ENCODE measurements at regions of chr10 and their contacts with region 1.

Region 1: DNA sequence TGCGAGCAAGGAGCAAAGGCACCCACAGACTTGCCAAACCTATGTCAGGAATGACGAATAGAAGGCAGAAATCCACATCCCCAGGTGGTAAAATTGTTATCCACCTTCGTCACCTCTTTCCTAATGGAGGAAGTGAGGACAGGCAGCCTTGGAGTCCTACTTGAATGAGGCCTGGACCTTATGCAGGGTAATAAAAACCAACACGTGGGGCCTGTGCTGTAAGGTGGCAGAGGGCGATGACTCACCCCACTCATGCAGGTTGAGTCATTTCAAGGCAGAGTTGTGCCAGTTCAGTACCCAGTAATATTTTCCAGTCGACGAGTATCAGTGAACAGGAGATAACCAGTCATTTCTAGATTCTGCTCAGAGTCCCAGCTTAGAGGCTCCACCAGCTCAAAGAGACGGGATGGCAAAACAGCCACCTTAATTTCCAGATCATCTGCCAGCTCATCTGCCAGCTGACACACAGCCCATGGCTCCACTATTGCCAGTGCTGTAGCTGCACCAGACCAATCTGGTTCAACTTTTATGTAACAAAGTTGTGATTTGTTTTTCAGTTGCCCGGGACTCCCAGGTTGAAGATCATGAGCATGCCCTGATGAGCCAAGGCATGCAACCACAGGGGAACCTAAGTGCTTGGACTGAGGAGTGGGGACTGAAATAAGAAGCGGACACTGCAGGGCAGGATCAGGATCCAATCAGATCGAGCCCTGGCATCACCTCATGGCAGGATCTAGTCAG is 176.2 kb upstream of the ITGB1 start:
- DNase-seq: peak; percentile 80 to 97
- H3K4me3 ChIP-seq: no peak overlapping the region
- H3K27ac ChIP-seq: peak overlapping the region; percentile 95
- H3K4me1 ChIP-seq: peaks cover 42% of the 10 kb centered on the region
- H3K27me3 ChIP-seq: no peaks in the 10 kb centered on the region
- CTCF ChIP-seq: no peak

Region 2: DNA sequence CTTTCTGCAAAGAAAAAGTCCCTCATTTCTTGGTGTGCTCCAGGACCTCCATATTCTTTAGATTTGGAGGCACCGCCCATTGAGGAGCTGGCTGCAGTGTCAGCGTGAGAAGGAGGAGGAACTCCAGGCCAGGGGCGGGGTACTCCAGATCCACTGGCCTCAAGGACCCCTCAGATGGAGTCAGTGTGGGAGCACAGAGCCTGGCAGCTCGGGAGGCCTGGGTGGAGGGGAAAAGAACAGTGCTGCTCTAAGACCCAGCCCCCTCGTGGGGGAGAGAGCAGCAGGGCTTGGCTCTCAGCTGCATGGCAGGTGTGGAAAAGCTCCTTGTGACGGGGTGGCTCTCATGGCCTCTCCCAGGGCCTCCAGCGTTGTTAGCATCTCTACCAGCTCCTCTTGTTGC is 246.7 kb before region 1 on chr10:
- CTCF ChIA-PET with region 1: no interaction called
- POLR2A ChIA-PET with region 1: no interaction called
- intact Hi-C with region 1: no loop called
- DNase-seq: no peak
- H3K4me3 ChIP-seq: no peak overlapping the region
- H3K27ac ChIP-seq: no peak overlapping the region
- H3K4me1 ChIP-seq: no peaks in the 10 kb centered on the region
- H3K27me3 ChIP-seq: no peaks in the 10 kb centered on the region
- CTCF ChIP-seq: no peak

Region 3: GRCh38 chr10:33098951-33099663 is 35.1 kb before region 1 on chr10:
- CTCF ChIA-PET with region 1: no interaction called
- POLR2A ChIA-PET with region 1: interaction called, 34 read pairs
- intact Hi-C with region 1: no loop called
- DNase-seq: no peak
- H3K4me3 ChIP-seq: no peak overlapping the region
- H3K27ac ChIP-seq: no peak overlapping the region
- H3K4me1 ChIP-seq: no peaks in the 10 kb centered on the region
- H3K27me3 ChIP-seq: no peaks in the 10 kb centered on the region
- CTCF ChIP-seq: no peak

Region 4: DNA sequence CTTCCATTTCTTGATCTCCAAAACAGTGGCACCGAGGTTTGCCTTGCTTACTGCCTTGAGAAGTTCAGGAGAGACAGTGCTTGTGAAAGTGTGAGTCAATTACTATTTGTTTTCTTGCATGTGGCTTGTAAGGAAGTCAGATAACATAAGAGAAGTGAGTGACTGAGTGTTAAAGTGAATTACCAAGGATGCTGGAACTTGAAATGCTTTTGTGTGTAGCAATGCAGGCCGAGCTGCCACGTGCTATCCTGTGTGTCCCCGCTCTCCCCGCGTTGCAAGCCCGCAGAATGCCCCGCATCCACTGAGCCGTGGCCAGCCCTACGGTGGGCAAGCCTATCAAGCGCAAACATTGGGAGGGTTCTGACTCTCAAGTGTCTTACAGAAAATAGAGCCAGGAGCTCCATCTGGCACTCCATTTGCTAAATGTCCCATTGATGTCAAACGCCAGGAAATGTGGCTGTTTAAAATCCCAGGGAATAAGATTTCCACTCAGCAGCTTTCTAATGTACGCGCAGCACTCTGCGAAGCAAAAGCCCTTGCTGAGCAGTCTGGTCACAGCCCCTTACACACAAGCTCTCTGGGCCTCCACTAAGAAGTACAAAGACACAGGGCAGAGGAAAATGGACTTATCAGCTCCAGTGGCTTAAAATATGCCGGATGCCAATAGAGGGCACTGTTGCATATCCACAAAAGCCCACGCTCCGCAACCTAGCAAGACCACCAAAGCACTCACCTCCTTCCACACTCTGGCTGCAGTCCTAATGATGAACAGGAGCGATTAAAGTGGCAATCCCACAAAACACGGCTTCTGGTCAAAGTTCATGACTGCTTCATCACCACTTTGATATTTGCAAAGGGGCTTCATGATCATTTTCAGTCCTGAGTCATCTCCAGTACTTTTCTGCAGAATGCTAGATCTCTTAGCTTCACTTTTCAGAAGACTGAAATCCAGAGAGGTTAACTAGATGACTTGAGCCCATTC is 18.2 kb before region 1 on chr10:
- CTCF ChIA-PET with region 1: interaction called, 3 read pairs
- POLR2A ChIA-PET with region 1: interaction called, 4 read pairs
- intact Hi-C with region 1: loop called (anchors 2 kb)
- DNase-seq: peak in 1 of 2 experiments; percentile 52
- H3K4me3 ChIP-seq: no peak overlapping the region
- H3K27ac ChIP-seq: no peak overlapping the region
- H3K4me1 ChIP-seq: peaks cover 37% of the 10 kb centered on the region
- H3K27me3 ChIP-seq: no peaks in the 10 kb centered on the region
- CTCF ChIP-seq: peak; percentile 43; the same call in 1 of the 2 replicates